CD14-positive monocyte (primary cell): ENCODE measurements at regions of chr1 and their contacts with region 1.

Region 1: GRCh38 chr1:147890177-147890790 is 12.3 kb upstream of the GJA8 start:
- DNase-seq: peak; percentile 15 to 33 (median 31)
- H3K4me3 ChIP-seq: no peak overlapping the region
- H3K4me3 Mint-ChIP-seq: peak overlapping the region in 1 of 2 donors; percentile 0
- H3K27ac ChIP-seq: no peak overlapping the region
- H3K27ac Mint-ChIP-seq: no peak overlapping the region
- H3K4me1 ChIP-seq: no peaks in the 10 kb centered on the region
- H3K4me1 Mint-ChIP-seq: peaks cover 2% of the 10 kb centered on the region
- H3K27me3 ChIP-seq: no peaks in the 10 kb centered on the region
- H3K27me3 Mint-ChIP-seq: peaks cover 4 to 7% (median 6%) of the 10 kb centered on the region in 3 donors
- CTCF ChIP-seq: peak; percentile 77

Region 2: GRCh38 chr1:147273409-147274336 is 616.6 kb before region 1 on chr1:
- intact Hi-C with region 1: loop called (anchors 2 to 10 kb)
- DNase-seq: peak; percentile 37 to 43 (median 39)
- H3K4me3 ChIP-seq: no peak overlapping the region
- H3K4me3 Mint-ChIP-seq: no peak overlapping the region
- H3K27ac ChIP-seq: no peak overlapping the region
- H3K27ac Mint-ChIP-seq: no peak overlapping the region
- H3K4me1 ChIP-seq: no peaks in the 10 kb centered on the region
- H3K4me1 Mint-ChIP-seq: no peaks in the 10 kb centered on the region
- H3K27me3 ChIP-seq: no peaks in the 10 kb centered on the region
- H3K27me3 Mint-ChIP-seq: peaks cover 0 to 2% (median 0%) of the 10 kb centered on the region in 3 donors
- CTCF ChIP-seq: peak; percentile 74

Region 3: DNA sequence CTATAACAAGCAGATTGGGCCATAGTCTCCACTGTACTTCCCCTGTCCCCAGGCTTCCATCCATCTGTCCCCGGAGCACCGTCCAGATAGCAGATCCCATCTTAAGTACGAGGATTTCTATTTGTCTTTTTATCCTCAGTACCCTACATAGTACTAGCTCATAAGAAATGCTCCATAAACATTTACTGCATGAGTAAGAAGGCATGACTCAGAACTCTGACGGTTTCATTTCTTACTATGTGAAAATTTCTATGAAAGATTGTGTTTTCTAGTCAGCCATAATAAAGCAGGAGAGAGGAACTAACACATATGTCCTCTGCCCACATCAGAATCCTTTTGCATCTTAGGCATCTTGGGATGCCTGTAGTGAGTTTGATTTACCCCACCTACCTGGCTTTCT is 598.3 kb before region 1 on chr1:
- intact Hi-C with region 1: no loop called
- DNase-seq: no peak
- H3K4me3 ChIP-seq: no peak overlapping the region
- H3K4me3 Mint-ChIP-seq: no peak overlapping the region
- H3K27ac ChIP-seq: no peak overlapping the region
- H3K27ac Mint-ChIP-seq: no peak overlapping the region
- H3K4me1 ChIP-seq: no peaks in the 10 kb centered on the region
- H3K4me1 Mint-ChIP-seq: no peaks in the 10 kb centered on the region
- H3K27me3 ChIP-seq: no peaks in the 10 kb centered on the region
- H3K27me3 Mint-ChIP-seq: peaks cover 0 to 3% (median 0%) of the 10 kb centered on the region in 3 donors
- CTCF ChIP-seq: no peak

Region 4: GRCh38 chr1:147494998-147495580 is 395.2 kb before region 1 on chr1:
- intact Hi-C with region 1: loop called in 1 of 2 experiments (anchors 5 kb)
- DNase-seq: peak; percentile 8 to 28 (median 25)
- H3K4me3 ChIP-seq: no peak overlapping the region
- H3K4me3 Mint-ChIP-seq: no peak overlapping the region
- H3K27ac ChIP-seq: no peak overlapping the region
- H3K27ac Mint-ChIP-seq: no peak overlapping the region
- H3K4me1 ChIP-seq: no peaks in the 10 kb centered on the region
- H3K4me1 Mint-ChIP-seq: peaks cover 2% of the 10 kb centered on the region
- H3K27me3 ChIP-seq: no peaks in the 10 kb centered on the region
- H3K27me3 Mint-ChIP-seq: peaks cover 0 to 6% (median 5%) of the 10 kb centered on the region in 3 donors
- CTCF ChIP-seq: peak; percentile 66

Region 5: DNA sequence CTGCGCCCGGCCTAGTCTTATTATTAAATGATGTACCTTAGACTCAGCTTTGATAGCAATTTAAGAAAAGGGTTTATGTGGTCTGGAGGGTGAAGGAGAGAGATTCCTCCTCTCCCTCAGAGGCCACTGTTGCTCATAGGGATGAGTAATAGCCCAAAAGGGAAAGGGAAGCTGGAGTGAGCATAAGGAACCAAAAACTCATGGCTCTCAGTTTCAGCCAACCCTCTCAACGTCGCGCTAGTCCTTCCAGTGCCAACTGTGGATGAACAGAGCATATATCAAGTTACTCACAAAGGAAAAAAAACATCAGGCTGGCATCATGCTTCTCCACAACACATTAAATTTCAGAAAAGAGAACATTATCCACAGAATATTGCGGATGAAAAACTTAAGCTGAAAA is 29.6 kb after region 1 on chr1:
- intact Hi-C with region 1: no loop called
- DNase-seq: no peak
- H3K4me3 ChIP-seq: no peak overlapping the region
- H3K4me3 Mint-ChIP-seq: no peak overlapping the region
- H3K27ac ChIP-seq: no peak overlapping the region
- H3K27ac Mint-ChIP-seq: no peak overlapping the region
- H3K4me1 ChIP-seq: no peaks in the 10 kb centered on the region
- H3K4me1 Mint-ChIP-seq: no peaks in the 10 kb centered on the region
- H3K27me3 ChIP-seq: no peaks in the 10 kb centered on the region
- H3K27me3 Mint-ChIP-seq: peaks cover 2 to 7% (median 2%) of the 10 kb centered on the region in 3 donors
- CTCF ChIP-seq: no peak